Activated naive CD4-positive, alpha-beta T cell treated with anti-CD3 and anti-CD28 coated beads for 36 hours (primary cell): ENCODE measurements at regions of chr17 and their contacts with region 1.

Region 1: DNA sequence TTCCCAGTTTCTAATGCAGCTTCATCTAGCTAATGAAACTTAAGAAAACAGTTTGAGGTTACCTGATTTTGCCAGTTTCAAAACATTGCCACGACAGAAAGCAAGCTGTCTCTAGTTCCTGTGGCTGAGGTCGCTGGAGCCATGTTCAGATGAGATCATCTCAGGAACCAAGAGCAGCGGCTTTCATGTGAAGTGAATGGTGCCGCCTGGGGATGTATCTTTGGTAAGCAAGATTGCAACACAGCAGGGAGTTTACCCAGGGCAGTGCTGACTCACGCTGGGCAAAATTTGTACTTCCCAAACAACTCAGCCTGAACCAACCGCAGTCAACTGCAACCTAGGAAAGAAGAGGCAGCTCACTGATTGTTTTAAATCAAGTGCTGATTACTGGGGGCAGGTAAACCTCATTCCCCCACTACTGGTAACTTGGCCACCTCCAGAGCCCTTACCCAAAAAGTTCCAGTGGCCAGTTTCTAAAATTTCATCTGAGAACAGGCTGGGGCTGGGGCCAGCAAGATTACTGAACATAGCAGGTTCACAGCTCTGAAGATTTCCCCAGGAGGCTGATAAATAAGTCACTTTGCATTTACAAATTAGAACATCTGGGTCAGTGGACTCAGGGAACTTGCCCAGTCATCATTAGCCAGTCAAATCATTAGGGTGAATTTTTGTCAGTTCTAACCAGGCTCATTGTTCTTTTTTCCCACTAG is at the start of gene RFFL:
- DNase-seq: peak; percentile 97
- H3K4me3 Mint-ChIP-seq: peak within 1 kb of the TSS; percentile 23
- H3K27ac Mint-ChIP-seq: peak within 1 kb of the TSS; percentile 65
- H3K4me1 Mint-ChIP-seq: peaks cover 57% of the 10 kb centered on the region
- H3K27me3 Mint-ChIP-seq: no peaks in the 10 kb centered on the region
- total RNA-seq, gene RFFL: 17.8 to 18.2 TPM

Region 2: GRCh38 chr17:35022536-35023063 is 41.1 kb before region 1 on chr17:
- CTCF ChIA-PET with region 1: interaction called, 5 read pairs
- intact Hi-C with region 1: loop called (anchors 1 kb)
- DNase-seq: peak; percentile 91
- H3K4me3 Mint-ChIP-seq: peak overlapping the region; percentile 81
- H3K27ac Mint-ChIP-seq: peak overlapping the region; percentile 98
- H3K4me1 Mint-ChIP-seq: peaks cover 35% of the 10 kb centered on the region
- H3K27me3 Mint-ChIP-seq: no peaks in the 10 kb centered on the region

Region 3: GRCh38 chr17:35073991-35074627 is 10.4 kb after region 1 on chr17:
- CTCF ChIA-PET with region 1: interaction called, 8 read pairs
- intact Hi-C with region 1: loop called (anchors 1 kb)
- DNase-seq: peak; percentile 45
- H3K4me3 Mint-ChIP-seq: peak overlapping the region; percentile 36
- H3K27ac Mint-ChIP-seq: peak overlapping the region; percentile 87
- H3K4me1 Mint-ChIP-seq: peaks cover 61% of the 10 kb centered on the region
- H3K27me3 Mint-ChIP-seq: no peaks in the 10 kb centered on the region

Region 4: GRCh38 chr17:35082073-35082657 is 18.5 kb after region 1 on chr17:
- CTCF ChIA-PET with region 1: interaction called, 8 read pairs
- intact Hi-C with region 1: loop called (anchors 1 kb)
- DNase-seq: no peak
- H3K4me3 Mint-ChIP-seq: peak overlapping the region; percentile 4
- H3K27ac Mint-ChIP-seq: peak overlapping the region; percentile 57
- H3K4me1 Mint-ChIP-seq: peaks cover 76% of the 10 kb centered on the region
- H3K27me3 Mint-ChIP-seq: no peaks in the 10 kb centered on the region